Sigmoid colon (tissue), 7 donors: ENCODE measurements at regions of chr22 and their contacts with region 1.

Region 1: GRCh38 chr22:31630331-31631329 is 31.4 kb downstream of the PISD start:
- DNase-seq: peak; percentile 88
- H3K4me3 ChIP-seq: peak overlapping the region; percentile 67 to 86 (median 74)
- H3K27ac ChIP-seq: peak overlapping the region; percentile 80 to 91 (median 86)
- H3K4me1 ChIP-seq: peaks cover 0 to 68% (median 60%) of the 10 kb centered on the region in 4 donors
- H3K27me3 ChIP-seq: no peaks in the 10 kb centered on the region
- CTCF ChIP-seq: no peak
- EP300 ChIP-seq: no peak
- POLR2A ChIP-seq: no peak

Region 2: GRCh38 chr22:31496007-31496734 is 134.5 kb before region 1 on chr22 and contains the start of gene SFI1:
- intact Hi-C with region 1: loop called (anchors 5 kb)
- DNase-seq: peak; percentile 95
- H3K4me3 ChIP-seq: peak within 1 kb of the TSS; percentile 56 to 83 (median 70)
- H3K27ac ChIP-seq: peak within 1 kb of the TSS; percentile 84 to 93 (median 84)
- H3K4me1 ChIP-seq: peaks cover 0 to 19% (median 8%) of the 10 kb centered on the region in 4 donors
- H3K27me3 ChIP-seq: no peaks in the 10 kb centered on the region
- CTCF ChIP-seq: no peak
- EP300 ChIP-seq: peak in 1 of 4 donors; percentile 11
- POLR2A ChIP-seq: peak in 1 of 2 donors; percentile 16
- total RNA-seq, gene SFI1: 15.3 to 38.0 (median 27.7) TPM

Region 3: DNA sequence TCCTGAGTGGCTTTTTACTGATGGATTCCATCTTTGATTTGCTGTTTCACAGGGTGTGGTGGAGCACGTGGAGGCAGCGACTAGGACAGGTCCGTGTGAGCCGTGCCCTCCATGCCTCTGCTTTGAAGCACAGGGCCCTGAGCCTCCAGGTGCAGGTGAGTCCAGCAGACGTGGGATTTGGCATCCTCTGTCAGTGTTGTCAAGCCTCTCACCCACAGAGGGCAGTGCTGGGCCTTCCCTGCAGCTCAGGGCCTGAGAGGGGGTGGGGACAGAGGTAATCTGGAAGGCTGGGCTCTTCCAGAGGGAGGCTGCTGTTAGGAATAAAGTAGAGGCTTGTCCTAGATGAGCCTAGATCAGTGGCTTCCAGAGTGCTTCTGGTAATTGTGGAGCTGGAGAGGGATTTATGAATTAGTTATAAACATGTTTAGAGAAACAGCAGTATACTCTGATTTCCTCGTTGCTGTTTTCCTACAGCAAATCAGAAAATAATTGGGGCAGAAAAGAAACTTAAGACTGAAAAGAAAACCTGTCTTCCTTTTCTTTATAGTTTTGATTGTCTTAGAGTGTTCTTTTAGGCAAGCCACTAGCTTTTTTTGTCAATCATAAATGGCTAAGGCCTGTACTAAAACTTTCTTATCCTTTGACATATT is 69.3 kb before region 1 on chr22:
- intact Hi-C with region 1: loop called (anchors 1 kb)
- DNase-seq: peak; percentile 87
- H3K4me3 ChIP-seq: no peak overlapping the region
- H3K27ac ChIP-seq: peak overlapping the region in 2 of 4 donors; percentile 27 to 44
- H3K4me1 ChIP-seq: peaks cover 0 to 8% (median 5%) of the 10 kb centered on the region in 4 donors
- H3K27me3 ChIP-seq: no peaks in the 10 kb centered on the region
- CTCF ChIP-seq: peak; percentile 53 to 80 (median 78)
- EP300 ChIP-seq: no peak
- POLR2A ChIP-seq: no peak

Region 4: DNA sequence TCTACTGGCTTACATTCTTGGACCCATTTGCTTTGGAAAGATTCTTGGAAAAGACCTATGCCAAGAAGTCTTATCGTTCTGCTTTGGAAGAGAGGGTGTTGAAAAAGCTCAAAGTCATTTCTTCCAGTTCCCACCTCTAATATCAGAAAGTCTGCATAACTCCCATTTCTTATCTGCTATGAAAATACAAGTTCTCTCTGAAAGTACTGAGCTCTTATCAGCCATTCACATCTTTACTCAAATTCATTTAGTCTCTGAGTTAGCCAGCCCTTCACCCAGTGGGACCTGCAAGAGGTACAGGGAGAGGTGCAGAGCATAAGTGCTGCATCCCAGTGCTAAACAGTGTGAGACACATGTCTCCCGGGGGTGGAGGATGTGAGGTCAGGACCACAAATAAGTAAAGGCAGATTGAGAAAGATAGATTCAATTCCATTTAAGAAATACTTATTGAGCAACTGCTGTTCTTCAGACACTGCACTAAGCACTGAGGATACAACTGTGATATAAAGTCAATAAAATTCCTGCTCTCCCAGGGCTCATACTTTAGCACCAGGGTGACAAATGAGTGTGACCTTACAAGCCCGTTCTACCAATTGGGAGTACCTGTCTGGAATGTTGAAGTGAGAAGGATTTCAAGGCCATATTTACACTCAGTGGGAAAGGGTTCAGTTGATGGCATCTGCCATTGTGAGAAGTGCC is 45.3 kb before region 1 on chr22:
- intact Hi-C with region 1: no loop called
- DNase-seq: no peak
- H3K4me3 ChIP-seq: no peak overlapping the region
- H3K27ac ChIP-seq: no peak overlapping the region
- H3K4me1 ChIP-seq: no peaks in the 10 kb centered on the region
- H3K27me3 ChIP-seq: no peaks in the 10 kb centered on the region
- CTCF ChIP-seq: no peak
- EP300 ChIP-seq: no peak
- POLR2A ChIP-seq: no peak

Region 5: DNA sequence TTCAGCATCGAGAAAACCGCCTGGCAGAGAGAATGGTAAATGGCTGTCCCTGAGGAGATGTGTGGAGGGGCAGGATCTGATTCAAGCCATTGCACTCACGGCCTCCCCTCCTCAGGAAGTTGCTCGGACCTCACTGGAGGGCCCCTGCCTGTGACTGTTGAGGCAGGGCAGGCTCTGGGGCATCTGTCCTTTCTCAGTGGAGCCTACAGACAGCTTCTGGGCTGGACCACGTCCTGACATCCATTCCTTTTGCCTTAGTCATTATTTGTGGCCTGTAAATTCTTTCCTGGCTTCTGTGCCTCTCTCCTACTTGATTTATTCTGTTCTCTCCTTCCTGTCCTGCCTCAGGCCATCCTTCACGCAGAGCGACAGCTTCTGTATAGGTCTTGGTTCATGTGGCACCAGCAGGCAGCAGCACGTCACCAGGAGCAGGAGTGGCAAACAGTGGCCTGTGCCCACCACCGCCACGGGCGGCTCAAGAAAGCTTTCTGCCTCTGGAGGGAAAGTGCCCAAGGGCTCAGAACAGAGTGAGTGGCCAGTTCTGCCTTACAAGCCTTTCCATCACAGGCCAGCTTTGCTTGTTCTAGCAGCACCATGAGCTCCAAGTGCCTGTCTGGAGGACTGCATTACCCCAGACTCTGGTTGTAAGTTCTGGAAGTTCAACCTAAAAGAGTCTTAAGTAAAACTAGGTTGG is 28.2 kb before region 1 on chr22:
- intact Hi-C with region 1: loop called (anchors 1 kb)
- DNase-seq: peak; percentile 91
- H3K4me3 ChIP-seq: no peak overlapping the region
- H3K27ac ChIP-seq: peak overlapping the region; percentile 63 to 93 (median 84)
- H3K4me1 ChIP-seq: peaks cover 0 to 51% (median 35%) of the 10 kb centered on the region in 4 donors
- H3K27me3 ChIP-seq: no peaks in the 10 kb centered on the region
- CTCF ChIP-seq: no peak
- EP300 ChIP-seq: peak in 3 of 4 donors; percentile 46 to 82 (median 74)
- POLR2A ChIP-seq: no peak

Region 6: DNA sequence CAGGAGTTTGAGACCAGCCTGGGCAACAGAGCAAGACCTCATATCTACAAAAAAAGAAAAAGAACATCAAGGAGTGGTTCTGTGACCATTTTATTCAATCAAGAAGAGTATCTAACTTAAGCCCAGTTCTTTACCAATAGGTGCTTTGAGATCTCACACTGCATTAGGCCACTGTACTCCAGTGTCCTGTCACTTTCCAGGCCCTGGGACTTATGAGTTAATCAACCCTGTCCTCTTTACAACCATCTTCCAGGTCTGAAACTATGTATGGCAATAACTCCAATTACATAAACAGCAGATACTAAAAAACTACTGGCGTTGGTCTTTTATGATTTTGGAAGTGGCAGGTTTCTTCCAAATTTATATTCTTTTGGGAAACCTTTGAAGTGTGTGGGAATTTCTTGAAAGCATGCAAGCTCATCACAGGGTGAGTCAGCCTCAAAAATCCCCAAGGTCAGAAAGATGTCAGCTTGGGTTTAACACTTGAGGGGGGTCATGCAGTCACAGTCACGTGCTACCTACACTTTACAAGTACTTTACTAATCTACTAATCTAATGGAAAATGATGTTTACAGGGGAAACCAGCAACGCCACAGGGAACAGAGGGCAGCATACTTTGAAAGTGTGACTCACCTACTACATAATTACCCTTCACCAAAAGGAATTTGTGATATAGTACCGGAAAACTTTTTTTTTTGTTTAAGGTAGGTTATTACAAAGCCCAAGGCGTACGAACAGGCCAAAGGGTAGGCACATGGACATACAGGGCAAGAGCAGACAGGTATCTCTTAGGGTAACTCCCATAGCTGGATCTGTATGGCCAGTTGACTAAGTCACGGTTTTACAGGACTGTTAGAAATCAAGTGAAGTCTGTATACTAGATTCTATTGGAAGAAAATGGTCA is 15.8 kb after region 1 on chr22:
- intact Hi-C with region 1: no loop called
- DNase-seq: no peak
- H3K4me3 ChIP-seq: no peak overlapping the region
- H3K27ac ChIP-seq: peak overlapping the region in 2 of 4 donors; percentile 35 to 37
- H3K4me1 ChIP-seq: peaks cover 0 to 20% (median 5%) of the 10 kb centered on the region in 4 donors
- H3K27me3 ChIP-seq: no peaks in the 10 kb centered on the region
- CTCF ChIP-seq: no peak
- EP300 ChIP-seq: no peak
- POLR2A ChIP-seq: no peak